Breast epithelium (tissue), 4 donors: ENCODE measurements at regions of chr12 and their contacts with region 1.

Region 1: DNA sequence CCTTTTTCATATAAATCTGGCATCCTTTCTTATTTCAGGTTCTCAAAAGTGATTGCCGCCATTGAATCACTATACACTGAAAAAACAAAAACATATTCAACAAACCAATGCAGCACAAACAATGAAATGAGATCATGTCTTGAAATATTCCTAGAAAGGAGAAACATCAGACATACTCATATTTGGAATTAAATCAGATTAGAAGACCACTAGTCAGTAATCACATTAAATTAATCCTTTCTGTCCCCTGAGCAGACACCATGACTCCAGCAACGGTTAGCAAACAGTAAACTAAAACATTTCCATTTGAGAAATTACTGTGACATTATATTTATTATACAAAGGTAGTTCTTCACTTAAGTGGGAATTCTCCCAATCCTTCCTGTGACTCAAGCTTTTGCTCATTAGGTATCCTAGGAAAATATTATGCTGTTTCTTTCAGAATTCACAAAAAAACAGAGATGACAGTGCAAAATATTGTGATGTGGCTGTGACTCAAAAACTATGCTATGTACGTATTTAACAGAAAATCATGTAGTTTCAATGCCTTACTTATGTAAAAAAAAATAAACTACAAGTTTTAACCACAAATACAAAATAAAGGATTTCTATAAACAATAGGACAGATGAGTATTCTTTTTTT is 29.7 kb downstream of the CPNE8 start:
- DNase-seq: no peak
- H3K4me3 ChIP-seq: no peak overlapping the region
- H3K27ac ChIP-seq: no peak overlapping the region
- H3K4me1 ChIP-seq: no peaks in the 10 kb centered on the region
- H3K27me3 ChIP-seq: no peaks in the 10 kb centered on the region
- CTCF ChIP-seq: no peak
- POLR2A ChIP-seq: no peak

Region 2: DNA sequence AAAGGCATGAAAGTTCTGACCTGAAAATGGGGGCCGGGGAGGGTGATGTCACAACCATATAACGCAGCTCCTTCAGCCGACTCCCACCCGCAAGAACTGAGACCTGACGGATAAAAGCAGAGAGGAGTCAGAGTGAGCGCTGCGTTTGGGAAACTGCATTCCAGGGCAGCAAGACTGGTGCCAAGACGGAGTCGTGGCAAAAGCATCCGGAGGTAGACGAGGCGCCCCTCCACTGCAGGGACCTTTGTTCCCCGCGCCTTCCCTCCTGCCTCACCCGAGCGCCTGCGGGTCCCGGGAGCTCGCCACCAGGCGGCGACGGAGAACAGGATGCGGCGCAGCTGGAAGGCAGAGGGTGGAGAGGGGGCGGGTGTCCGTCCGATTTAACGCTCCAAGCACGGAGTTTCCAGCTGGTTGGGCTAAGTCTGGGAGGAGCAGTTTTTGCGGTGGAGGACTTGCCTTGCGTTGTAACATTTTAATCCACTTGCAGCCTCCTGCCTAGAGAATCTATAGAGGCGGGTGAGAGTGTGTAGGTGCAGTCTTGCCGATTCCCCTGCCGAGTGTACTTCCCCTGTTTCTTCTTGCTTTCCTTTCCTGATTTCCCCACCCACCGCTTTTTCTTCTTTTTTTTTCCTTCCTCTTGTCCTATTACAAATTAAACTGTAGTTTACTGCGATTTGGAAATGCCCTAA is 30.9 kb after region 1 on chr12:
- intact Hi-C with region 1: no loop called
- DNase-seq: peak; percentile 72 to 79
- H3K4me3 ChIP-seq: peak overlapping the region; percentile 67 to 87 (median 73)
- H3K27ac ChIP-seq: peak overlapping the region; percentile 90 to 99
- H3K4me1 ChIP-seq: no peaks in the 10 kb centered on the region
- H3K27me3 ChIP-seq: no peaks in the 10 kb centered on the region
- CTCF ChIP-seq: peak; percentile 17 to 76 (median 73)
- POLR2A ChIP-seq: peak; percentile 24

Region 3: DNA sequence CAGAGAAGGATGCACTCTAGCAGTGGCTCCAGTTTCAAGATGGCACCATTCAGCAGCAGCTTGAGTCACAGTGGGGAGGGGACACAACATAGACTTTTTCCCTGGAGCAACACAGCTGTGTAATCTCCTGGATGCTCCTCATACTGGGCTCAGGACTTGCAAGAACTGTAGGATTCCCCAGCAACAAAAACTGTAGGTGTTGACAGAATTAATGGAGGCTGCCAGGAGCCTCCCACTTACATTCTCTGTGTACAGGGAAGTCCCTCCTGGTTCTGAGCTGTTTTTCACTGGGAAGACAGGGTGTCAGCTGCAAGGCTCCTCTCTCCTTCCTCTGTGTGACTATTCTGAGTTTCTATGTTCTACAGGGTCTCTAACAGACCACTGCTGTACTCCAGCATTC is 349.3 kb after region 1 on chr12:
- intact Hi-C with region 1: no loop called
- DNase-seq: no peak
- H3K4me3 ChIP-seq: no peak overlapping the region
- H3K27ac ChIP-seq: no peak overlapping the region
- H3K4me1 ChIP-seq: no peaks in the 10 kb centered on the region
- H3K27me3 ChIP-seq: no peaks in the 10 kb centered on the region
- CTCF ChIP-seq: no peak
- POLR2A ChIP-seq: no peak

Region 4: DNA sequence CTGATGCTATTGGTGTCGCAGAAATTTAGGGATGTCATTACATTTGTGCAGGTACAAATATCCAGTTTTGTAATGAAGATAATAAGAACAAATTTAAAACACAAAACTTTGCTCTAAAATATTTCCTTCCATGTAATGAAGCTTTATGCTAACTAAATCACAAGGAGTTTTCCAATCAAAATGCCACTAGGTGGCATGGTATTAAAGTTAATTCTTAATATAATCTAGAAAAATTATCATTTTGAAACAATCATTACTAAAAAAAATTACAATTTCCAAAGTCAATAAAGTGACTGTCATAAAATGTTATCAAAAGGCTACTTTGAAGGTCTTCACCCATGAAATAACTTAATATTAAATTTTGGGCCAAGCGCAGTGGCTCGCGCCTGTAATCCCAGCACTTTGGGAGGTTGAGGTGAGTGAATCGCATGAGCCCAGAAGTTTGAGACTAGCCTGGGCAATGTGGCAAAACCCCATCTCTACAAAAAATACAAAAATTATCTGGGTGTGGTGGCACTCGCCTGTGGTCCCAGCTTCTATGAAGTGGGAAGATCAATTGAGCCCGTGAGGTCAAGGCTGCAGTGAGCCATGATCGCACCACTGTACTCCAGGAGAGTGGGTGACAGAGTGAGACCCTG is 489.8 kb after region 1 on chr12:
- intact Hi-C with region 1: loop called (anchors 10 kb)
- DNase-seq: no peak
- H3K4me3 ChIP-seq: no peak overlapping the region
- H3K27ac ChIP-seq: no peak overlapping the region
- H3K4me1 ChIP-seq: no peaks in the 10 kb centered on the region
- H3K27me3 ChIP-seq: no peaks in the 10 kb centered on the region
- CTCF ChIP-seq: no peak
- POLR2A ChIP-seq: no peak